ENCODE measurements at regions of chr14 and their contacts with region 1.

Region 1: GRCh38 chr14:34365309-34365915 is 96.6 kb downstream of the SPTSSA start:
- DNase-seq: no peak
- H3K4me3 ChIP-seq: no peak overlapping the region
- H3K27ac ChIP-seq: no peak overlapping the region
- H3K4me1 ChIP-seq: peaks cover 5 to 37% (median 17%) of the 10 kb centered on the region in 4 donors
- H3K27me3 ChIP-seq: no peaks in the 10 kb centered on the region
- CTCF ChIP-seq: peak; percentile 30 to 54 (median 32)
- EP300 ChIP-seq: no peak
- POLR2A ChIP-seq: no peak

Region 2: GRCh38 chr14:33959692-33960151 is 405.7 kb before region 1 on chr14:
- in situ Hi-C with region 1: no loop called
- intact Hi-C with region 1: no loop called
- DNase-seq: no peak
- H3K4me3 ChIP-seq: no peak overlapping the region
- H3K27ac ChIP-seq: no peak overlapping the region
- H3K4me1 ChIP-seq: no peaks in the 10 kb centered on the region
- H3K27me3 ChIP-seq: no peaks in the 10 kb centered on the region
- CTCF ChIP-seq: no peak
- EP300 ChIP-seq: no peak
- POLR2A ChIP-seq: no peak

Region 3: DNA sequence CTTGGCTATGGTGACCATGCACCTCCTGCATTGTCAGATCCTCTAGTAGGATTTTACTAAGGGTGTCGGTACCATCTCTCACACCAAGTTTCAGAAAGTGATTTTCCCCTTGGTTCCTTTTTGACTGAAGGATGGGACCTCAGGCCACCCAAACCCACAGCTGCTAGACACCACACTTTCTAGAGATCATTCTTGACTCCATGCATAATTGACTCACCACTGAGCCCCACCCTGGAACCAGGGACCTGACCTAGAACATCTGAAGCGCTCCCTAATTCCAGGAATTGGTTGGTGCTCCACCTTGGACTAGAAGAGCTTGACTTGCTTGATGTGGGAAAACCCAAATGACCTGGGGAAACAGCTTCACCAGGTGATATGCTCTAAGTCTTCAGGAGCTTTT is 207.8 kb before region 1 on chr14:
- in situ Hi-C with region 1: no loop called
- intact Hi-C with region 1: no loop called
- DNase-seq: no peak
- H3K4me3 ChIP-seq: no peak overlapping the region
- H3K27ac ChIP-seq: no peak overlapping the region
- H3K4me1 ChIP-seq: no peaks in the 10 kb centered on the region
- H3K27me3 ChIP-seq: no peaks in the 10 kb centered on the region
- CTCF ChIP-seq: no peak
- EP300 ChIP-seq: no peak
- POLR2A ChIP-seq: no peak

Region 4: GRCh38 chr14:34496679-34497513 is 131.5 kb after region 1 on chr14:
- in situ Hi-C with region 1: loop called in 1 of 4 experiments (anchors 10 kb)
- intact Hi-C with region 1: no loop called
- DNase-seq: peak; percentile 74
- H3K4me3 ChIP-seq: no peak overlapping the region
- H3K27ac ChIP-seq: peak overlapping the region; percentile 84 to 91 (median 89)
- H3K4me1 ChIP-seq: peaks cover 13 to 39% (median 26%) of the 10 kb centered on the region in 4 donors
- H3K27me3 ChIP-seq: no peaks in the 10 kb centered on the region
- CTCF ChIP-seq: peak in 1 of 5 experiments; percentile 21
- EP300 ChIP-seq: peak; percentile 94
- POLR2A ChIP-seq: peak; percentile 21

Measured in transverse colon (tissue), 4 donors.